Activated T-helper 2 cell treated with anti-CD3 and anti-CD28 coated beads, Interferon-gamma antibody, Interleukin-2, Interleukin-4, amounts not matched to agents 10 μg/mL and 5 μg/mL and 100 μg/mL, durations not matched to agents 14 hours and 24 hours and 36 hours (primary cell): ENCODE measurements at regions of chr18 and their contacts with region 1.

Region 1: GRCh38 chr18:58781627-58782194 is 83.0 kb upstream of the ZNF532 start:
- DNase-seq: peak; percentile 46
- H3K4me3 Mint-ChIP-seq: no peak overlapping the region
- H3K27ac Mint-ChIP-seq: no peak overlapping the region
- H3K4me1 Mint-ChIP-seq: no peaks in the 10 kb centered on the region
- H3K27me3 Mint-ChIP-seq: peaks cover 4% of the 10 kb centered on the region

Region 2: GRCh38 chr18:59056706-59057492 is 275.2 kb after region 1 on chr18:
- intact Hi-C with region 1: loop called (anchors 1 kb)
- DNase-seq: peak; percentile 40
- H3K4me3 Mint-ChIP-seq: no peak overlapping the region
- H3K27ac Mint-ChIP-seq: no peak overlapping the region
- H3K4me1 Mint-ChIP-seq: no peaks in the 10 kb centered on the region
- H3K27me3 Mint-ChIP-seq: no peaks in the 10 kb centered on the region

Region 3: GRCh38 chr18:59070181-59070912 is 288.6 kb after region 1 on chr18:
- intact Hi-C with region 1: loop called (anchors 1 kb)
- DNase-seq: peak; percentile 65
- H3K4me3 Mint-ChIP-seq: no peak overlapping the region
- H3K27ac Mint-ChIP-seq: no peak overlapping the region
- H3K4me1 Mint-ChIP-seq: peaks cover 5% of the 10 kb centered on the region
- H3K27me3 Mint-ChIP-seq: peaks cover 13% of the 10 kb centered on the region